PC-3 (cell line): ENCODE measurements at regions of chr5 and their contacts with region 1.

Region 1: DNA sequence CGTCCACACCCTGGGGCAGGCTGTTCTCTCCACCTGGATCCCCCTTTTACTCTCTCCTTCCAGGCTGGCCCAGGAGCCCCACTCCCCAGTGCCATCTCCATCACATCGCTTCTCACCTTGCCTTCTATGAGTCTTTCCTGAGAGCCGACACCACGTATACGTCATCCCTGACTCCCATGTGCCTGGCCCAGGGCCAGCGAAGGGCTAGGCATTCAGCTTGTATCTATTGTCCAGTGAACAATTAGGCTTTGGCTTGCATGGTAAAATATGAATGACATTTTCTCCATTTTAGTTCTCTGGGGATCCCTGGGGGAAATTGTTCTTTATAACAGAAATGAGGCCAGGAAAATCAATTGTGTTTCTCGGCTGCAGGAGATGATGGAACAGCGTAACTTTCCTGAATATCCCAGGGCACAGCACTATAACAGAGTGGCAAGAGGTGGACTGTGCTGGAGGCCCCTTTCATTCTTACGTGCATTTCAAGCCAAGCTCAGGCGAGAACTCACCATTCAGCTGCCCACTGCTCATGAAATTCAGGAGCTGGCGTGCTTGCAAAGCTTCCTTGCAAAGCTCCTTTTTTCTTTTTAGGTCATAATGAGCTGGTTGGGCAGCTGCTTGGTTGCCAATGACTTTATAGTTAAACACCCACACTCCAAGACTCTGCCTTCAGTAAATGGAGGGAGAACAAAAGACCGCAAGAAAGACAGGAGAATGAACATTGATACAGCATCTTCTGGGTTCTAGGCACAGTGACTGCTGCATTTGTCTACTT is 37.7 kb downstream of the NSG2 start:
- DNase-seq: no peak
- ATAC-seq: no peak
- H3K4me3 ChIP-seq: no peak overlapping the region
- H3K27ac ChIP-seq: no peak overlapping the region
- H3K4me1 ChIP-seq: peaks cover 4% of the 10 kb centered on the region; the same call in 1 of the 2 replicates
- H3K27me3 ChIP-seq: peaks cover 70% of the 10 kb centered on the region
- CTCF ChIP-seq: no peak

Region 2: GRCh38 chr5:173697931-173698579 is 385.2 kb before region 1 on chr5:
- CTCF ChIA-PET with region 1: no interaction called
- POLR2A ChIA-PET with region 1: no interaction called
- intact Hi-C with region 1: no loop called
- DNase-seq: no peak
- ATAC-seq: no peak
- H3K4me3 ChIP-seq: no peak overlapping the region
- H3K27ac ChIP-seq: no peak overlapping the region
- H3K4me1 ChIP-seq: no peaks in the 10 kb centered on the region
- H3K27me3 ChIP-seq: no peaks in the 10 kb centered on the region
- CTCF ChIP-seq: no peak

Region 3: DNA sequence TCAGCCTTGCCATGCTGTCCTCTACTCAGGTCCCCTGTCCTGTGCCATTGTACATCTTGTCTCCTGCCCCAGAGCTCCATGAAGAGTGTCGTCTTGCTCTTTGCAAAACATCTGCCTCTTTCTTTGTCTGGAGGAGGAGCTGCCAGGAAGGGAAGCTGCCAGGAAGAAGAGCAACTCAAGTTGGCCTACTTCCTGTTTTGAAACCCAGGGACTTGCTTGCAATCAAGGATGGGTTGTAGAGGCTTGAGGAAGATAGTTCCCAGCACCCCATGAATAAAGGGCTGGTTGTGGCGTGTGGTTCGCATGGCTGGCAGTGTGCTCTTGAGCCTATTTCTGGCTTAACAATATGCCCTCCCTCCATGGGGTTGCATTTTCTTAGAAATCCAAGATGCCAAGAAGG is 248.1 kb before region 1 on chr5:
- CTCF ChIA-PET with region 1: no interaction called
- POLR2A ChIA-PET with region 1: no interaction called
- intact Hi-C with region 1: loop called (anchors 5 kb)
- DNase-seq: no peak
- ATAC-seq: no peak
- H3K4me3 ChIP-seq: no peak overlapping the region
- H3K27ac ChIP-seq: no peak overlapping the region
- H3K4me1 ChIP-seq: peaks cover under 1% of the 10 kb centered on the region; the same call in 1 of the 2 replicates
- H3K27me3 ChIP-seq: no peaks in the 10 kb centered on the region
- CTCF ChIP-seq: no peak